Activated T-helper 1 cell treated with anti-CD3 and anti-CD28 coated beads, Interleukin-12 subunit alpha, Interleukin-12 subunit beta, Interleukin-2, Interleukin-4 antibody, amounts not matched to agents 30 ng/mL and 10 ng/mL and 1 ng/mL, durations not matched to agents 14 hours and 24 hours and 36 hours (primary cell): ENCODE measurements at regions of chr2 and their contacts with region 1.

Region 1: GRCh38 chr2:227545990-227546389 is 52.7 kb upstream of the SCYGR2 start:
- DNase-seq: no peak
- H3K4me3 Mint-ChIP-seq: no peak overlapping the region
- H3K27ac Mint-ChIP-seq: no peak overlapping the region
- H3K4me1 Mint-ChIP-seq: peaks cover 26% of the 10 kb centered on the region
- H3K27me3 Mint-ChIP-seq: no peaks in the 10 kb centered on the region

Region 2: DNA sequence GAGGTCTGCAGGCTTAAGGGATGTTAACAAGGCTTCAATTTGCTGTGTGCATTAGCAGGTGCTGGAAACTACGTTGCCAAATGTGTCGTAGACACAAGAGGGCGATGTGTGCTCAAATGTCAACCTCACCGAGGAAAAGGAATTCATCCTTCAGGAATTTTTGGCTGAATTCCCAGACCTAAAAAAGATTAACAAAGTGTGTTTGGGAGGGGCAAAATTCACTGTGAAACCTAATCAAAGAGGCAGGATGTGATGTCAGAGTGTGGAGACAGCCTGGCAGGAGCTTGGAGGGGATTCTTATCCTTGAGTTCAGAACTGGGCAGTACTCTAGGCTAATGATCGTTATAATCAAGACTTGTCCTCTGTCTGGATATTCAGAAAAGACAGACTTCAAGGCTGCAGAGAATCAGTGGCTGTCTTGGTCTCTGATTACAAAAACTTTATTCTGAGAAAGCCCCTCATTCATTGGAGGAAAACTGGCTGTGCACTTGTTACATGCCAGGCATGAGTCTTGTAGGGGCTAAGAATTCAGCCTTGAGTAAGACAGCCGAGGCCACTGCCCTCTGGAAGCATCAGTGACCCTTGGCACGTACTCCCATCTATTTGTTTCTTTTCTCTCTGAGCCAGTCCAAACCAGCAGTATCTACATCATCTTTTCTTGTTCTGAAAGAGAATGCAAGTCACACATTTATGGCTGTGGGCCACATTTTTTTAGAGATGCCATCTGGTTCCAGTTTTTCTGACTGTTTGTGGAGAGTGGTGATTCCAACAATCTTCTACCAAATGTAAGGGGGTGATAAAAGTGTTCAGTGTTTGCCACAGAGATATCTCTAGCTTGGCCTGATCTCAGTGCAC is 139.6 kb before region 1 on chr2:
- intact Hi-C with region 1: loop called (anchors 2 kb)
- DNase-seq: no peak
- H3K4me3 Mint-ChIP-seq: no peak overlapping the region
- H3K27ac Mint-ChIP-seq: peak overlapping the region; percentile 1
- H3K4me1 Mint-ChIP-seq: peaks cover 40% of the 10 kb centered on the region
- H3K27me3 Mint-ChIP-seq: peaks cover 2% of the 10 kb centered on the region